ENCODE measurements at regions of chr10 and their contacts with region 1.

Region 1: DNA sequence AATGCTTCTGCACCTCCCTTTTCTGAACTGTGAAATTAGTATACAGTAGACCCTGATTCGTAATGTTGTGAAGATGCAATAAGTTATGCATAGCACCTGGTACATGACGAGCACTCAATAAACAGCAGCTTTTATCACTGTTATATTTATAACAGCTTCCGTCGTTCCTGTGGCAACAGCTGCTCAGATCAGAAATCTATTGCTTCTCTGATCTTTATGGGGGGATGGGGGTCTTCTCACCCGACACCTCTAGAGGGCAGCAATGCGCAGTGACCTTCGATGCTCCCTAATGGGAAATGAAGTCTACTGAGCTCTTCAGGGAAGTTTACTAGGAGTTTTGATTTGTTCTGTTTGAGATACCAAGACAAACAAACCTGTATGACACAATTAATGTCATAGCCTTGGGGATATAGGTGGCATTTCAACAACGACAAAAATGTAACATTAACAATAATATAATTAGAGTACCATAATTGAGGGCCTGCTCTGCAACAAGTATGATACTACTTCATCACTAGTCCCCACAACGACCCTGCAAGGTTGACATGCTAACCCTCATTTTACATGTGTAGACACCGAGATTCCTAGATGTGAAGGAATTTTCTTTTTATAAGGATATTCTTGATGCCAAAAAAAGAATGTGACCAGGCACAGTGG is 289.6 kb downstream of the SFMBT2 start:
- DNase-seq: peak; percentile 77
- ATAC-seq: peak; percentile 90
- H3K4me3 Mint-ChIP-seq: no peak overlapping the region
- H3K27ac Mint-ChIP-seq: no peak overlapping the region
- H3K4me1 Mint-ChIP-seq: no peaks in the 10 kb centered on the region
- H3K27me3 Mint-ChIP-seq: no peaks in the 10 kb centered on the region; the same call in 1 of the 2 replicates
- CTCF ChIP-seq: peak; percentile 61

Region 2: DNA sequence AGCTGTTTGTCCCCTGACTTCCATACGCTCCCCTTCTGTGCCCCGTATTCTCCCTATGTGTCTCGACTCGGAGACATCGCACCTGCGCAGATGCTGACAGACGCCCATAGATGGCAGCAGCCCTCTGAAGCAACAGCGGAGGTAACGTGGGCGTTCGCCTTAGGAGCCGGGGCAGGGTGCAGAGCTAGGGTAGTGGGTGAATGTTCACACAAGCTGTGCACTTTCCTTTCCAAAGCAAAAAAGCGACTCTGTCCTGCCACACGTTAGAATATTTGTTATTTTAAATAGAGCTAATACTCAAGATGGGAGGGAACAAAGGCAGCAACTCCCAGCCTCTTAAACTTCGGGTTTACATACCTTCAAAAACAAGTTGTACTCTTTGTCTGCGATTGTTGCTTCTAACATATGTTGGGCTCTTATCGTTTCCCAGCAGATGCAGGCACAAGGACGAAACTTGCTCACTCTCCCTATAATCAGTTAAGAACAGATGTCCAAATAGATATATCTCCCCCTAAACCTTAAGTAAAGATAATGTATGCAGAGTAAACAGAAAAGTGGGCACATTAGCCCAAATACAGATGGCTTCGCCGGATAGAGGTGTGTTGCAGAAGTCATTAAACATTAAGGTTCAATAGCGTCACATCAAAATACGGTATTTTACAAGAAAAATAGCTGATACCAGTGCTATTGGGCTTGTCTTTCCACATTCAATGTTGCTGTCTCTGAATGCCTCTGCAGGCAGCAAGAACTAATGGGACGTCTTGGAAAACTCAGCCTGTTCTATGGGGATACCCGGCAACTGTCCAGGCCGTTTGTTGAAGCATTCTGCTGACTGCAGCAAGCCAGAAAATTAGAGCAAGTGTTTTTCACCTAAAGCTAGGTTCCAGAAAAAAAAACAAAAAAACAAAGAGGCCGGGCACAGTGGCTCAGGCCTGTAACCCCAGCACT is 200.9 kb before region 1 on chr10:
- CTCF ChIA-PET with region 1: interaction called, 11 read pairs
- POLR2A ChIA-PET with region 1: no interaction called
- DNase-seq: peak; percentile 83
- ATAC-seq: peak; percentile 99
- H3K4me3 Mint-ChIP-seq: no peak overlapping the region
- H3K27ac Mint-ChIP-seq: no peak overlapping the region
- H3K4me1 Mint-ChIP-seq: peaks cover 15% of the 10 kb centered on the region
- H3K27me3 Mint-ChIP-seq: peaks cover 4% of the 10 kb centered on the region; the same call in 1 of the 2 replicates
- CTCF ChIP-seq: peak; percentile 42

Region 3: DNA sequence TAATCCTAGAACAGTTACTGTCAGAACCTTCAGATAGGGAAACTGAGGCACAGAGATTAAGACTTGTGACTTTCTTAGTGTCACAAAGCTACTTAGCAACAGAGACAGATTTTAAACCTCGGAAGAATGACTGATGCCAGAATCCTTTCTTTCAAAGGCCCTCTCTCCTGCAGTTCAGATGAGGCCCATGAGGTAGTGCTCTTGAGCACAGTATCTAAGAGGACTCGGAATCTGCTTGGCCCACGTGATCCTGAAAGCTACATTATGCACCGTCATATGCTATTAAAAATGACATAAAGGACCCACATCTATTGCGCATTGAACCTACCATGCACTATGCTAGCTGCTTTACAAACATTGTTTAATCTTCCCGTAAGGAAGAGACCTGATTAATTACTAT is 66.4 kb before region 1 on chr10:
- CTCF ChIA-PET with region 1: interaction called, 10 read pairs
- POLR2A ChIA-PET with region 1: no interaction called
- DNase-seq: peak; percentile 26
- ATAC-seq: peak; percentile 94
- H3K4me3 Mint-ChIP-seq: no peak overlapping the region
- H3K27ac Mint-ChIP-seq: no peak overlapping the region
- H3K4me1 Mint-ChIP-seq: peaks cover 11% of the 10 kb centered on the region
- H3K27me3 Mint-ChIP-seq: no peaks in the 10 kb centered on the region
- CTCF ChIP-seq: peak; percentile 24; the same call in 1 of the 2 replicates

Region 4: DNA sequence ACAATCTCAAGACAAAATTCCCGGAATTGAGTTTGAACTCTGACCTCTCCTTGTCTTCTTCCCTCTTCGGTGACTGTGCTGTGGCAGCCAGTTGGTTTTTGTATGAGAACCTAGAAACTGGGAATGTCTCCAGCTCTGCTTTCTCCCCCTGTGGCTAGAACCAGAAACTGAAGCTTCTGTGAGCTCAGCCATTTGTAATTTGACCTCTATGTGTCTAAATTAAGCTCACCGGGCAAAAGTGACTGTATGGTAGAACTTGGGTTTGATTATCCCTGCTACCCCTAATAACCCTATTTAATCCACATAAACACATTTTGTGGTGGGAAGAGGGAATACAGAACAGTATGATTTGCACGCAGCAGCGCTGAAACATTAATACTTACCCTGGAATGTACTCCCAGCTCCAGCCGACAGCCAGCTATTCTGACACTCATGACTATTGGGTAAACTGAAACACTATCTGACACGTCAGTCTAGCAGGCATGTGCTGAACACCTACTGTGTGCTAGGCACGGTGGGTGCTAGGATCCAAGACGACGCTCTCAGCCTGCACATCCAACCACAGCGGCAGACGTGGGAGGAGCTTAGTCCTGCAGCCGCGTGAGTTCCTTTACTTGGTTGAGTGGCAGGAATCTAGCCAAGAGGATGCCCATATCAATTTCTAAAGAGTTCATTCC is 35.2 kb before region 1 on chr10:
- CTCF ChIA-PET with region 1: interaction called, 24 read pairs
- POLR2A ChIA-PET with region 1: no interaction called
- DNase-seq: peak; percentile 20
- ATAC-seq: peak; percentile 86
- H3K4me3 Mint-ChIP-seq: no peak overlapping the region
- H3K27ac Mint-ChIP-seq: peak overlapping the region; percentile 42
- H3K4me1 Mint-ChIP-seq: peaks cover 49% of the 10 kb centered on the region
- H3K27me3 Mint-ChIP-seq: peaks cover 10% of the 10 kb centered on the region
- CTCF ChIP-seq: no peak

Region 5: GRCh38 chr10:7092603-7093002 is 28.7 kb before region 1 on chr10:
- CTCF ChIA-PET with region 1: interaction called, 12 read pairs
- POLR2A ChIA-PET with region 1: no interaction called
- DNase-seq: no peak
- ATAC-seq: no peak
- H3K4me3 Mint-ChIP-seq: no peak overlapping the region
- H3K27ac Mint-ChIP-seq: no peak overlapping the region
- H3K4me1 Mint-ChIP-seq: no peaks in the 10 kb centered on the region
- H3K27me3 Mint-ChIP-seq: peaks cover 3% of the 10 kb centered on the region
- CTCF ChIP-seq: no peak

Region 6: GRCh38 chr10:7301006-7301793 is 179.9 kb after region 1 on chr10:
- CTCF ChIA-PET with region 1: interaction called, 11 read pairs
- POLR2A ChIA-PET with region 1: no interaction called
- DNase-seq: peak; percentile 69
- ATAC-seq: peak; percentile 91
- H3K4me3 Mint-ChIP-seq: no peak overlapping the region
- H3K27ac Mint-ChIP-seq: no peak overlapping the region
- H3K4me1 Mint-ChIP-seq: peaks cover 43% of the 10 kb centered on the region
- H3K27me3 Mint-ChIP-seq: no peaks in the 10 kb centered on the region
- CTCF ChIP-seq: 0 out of 2 replicates have a peak, but pooled peaks have one; percentile 27

Region 7: GRCh38 chr10:7354354-7355026 is 233.2 kb after region 1 on chr10:
- CTCF ChIA-PET with region 1: no interaction called
- POLR2A ChIA-PET with region 1: no interaction called
- DNase-seq: no peak
- ATAC-seq: no peak
- H3K4me3 Mint-ChIP-seq: no peak overlapping the region
- H3K27ac Mint-ChIP-seq: peak overlapping the region; percentile 12; the same call in 1 of the 2 replicates
- H3K4me1 Mint-ChIP-seq: peaks cover 5% of the 10 kb centered on the region
- H3K27me3 Mint-ChIP-seq: no peaks in the 10 kb centered on the region
- CTCF ChIP-seq: no peak

Region 8: GRCh38 chr10:7410862-7411670 is 289.8 kb after region 1 on chr10 and contains the start of gene SFMBT2:
- CTCF ChIA-PET with region 1: interaction called, 38 read pairs
- POLR2A ChIA-PET with region 1: no interaction called
- DNase-seq: peak; percentile 77
- ATAC-seq: peak; percentile 16
- H3K4me3 Mint-ChIP-seq: peak within 1 kb of the TSS; percentile 92
- H3K27ac Mint-ChIP-seq: peak within 1 kb of the TSS; percentile 30; the same call in 1 of the 2 replicates
- H3K4me1 Mint-ChIP-seq: peaks cover 22% of the 10 kb centered on the region
- H3K27me3 Mint-ChIP-seq: peaks cover 80% of the 10 kb centered on the region
- CTCF ChIP-seq: no peak
- total RNA-seq, gene SFMBT2: 10.9 to 14.3 TPM (median 12.0 TPM) in 3 replicates